ENCODE measurements at regions of chr22 and their contacts with region 1.

Region 1: GRCh38 chr22:22045571-22046335 is 63.2 kb upstream of the TOP3B start:
- DNase-seq: no peak
- H3K4me3 ChIP-seq: no peak overlapping the region
- H3K27ac ChIP-seq: no peak overlapping the region
- H3K4me1 ChIP-seq: no peaks in the 10 kb centered on the region
- H3K27me3 ChIP-seq: no peaks in the 10 kb centered on the region
- CTCF ChIP-seq: no peak
- POLR2A ChIP-seq: no peak

Region 2: DNA sequence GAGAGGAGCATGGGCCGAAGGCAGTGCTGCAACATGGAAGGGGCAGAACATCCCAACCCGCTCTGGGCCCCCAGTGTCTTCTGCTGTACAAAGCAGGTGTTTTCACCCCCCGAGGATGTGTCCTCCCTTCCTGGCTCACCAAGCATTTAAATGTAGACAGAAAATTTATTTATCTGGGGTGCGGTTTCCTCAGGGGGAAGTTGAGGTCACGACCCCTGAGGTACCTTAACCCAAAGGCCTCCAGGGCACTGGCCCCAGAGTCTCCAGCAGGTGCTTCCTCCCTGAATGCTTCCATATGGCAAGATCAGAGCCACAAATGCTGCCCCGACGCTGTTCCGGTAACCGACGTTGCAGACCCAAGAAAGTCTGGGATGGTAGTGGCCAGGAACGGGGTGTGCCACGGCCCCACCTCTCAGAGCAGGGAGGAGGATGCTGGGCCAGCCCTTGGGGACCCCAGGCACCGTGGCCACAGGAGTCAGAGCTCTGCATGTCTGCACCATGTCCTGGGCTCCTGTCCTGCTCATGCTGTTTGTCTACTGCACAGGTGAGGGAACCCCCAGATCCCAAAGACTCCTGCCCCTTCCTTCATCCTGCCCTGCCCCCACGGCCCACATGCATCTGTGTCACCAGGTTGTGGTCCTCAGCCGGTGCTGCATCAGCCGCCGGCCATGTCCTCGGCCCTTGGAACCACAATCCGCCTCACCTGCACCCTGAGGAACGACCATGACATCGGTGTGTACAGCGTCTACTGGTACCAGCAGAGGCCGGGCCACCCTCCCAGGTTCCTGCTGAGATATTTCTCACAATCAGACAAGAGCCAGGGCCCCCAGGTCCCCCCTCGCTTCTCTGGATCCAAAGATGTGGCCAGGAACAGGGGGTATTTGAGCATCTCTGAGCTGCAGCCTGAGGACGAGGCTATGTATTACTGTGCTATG is 198.8 kb after region 1 on chr22 and contains the start of gene VPREB1:
- intact Hi-C with region 1: loop called (anchors 5 kb)
- DNase-seq: peak in 1 of 2 donors; percentile 64
- H3K4me3 ChIP-seq: no peak within 1 kb of the TSS
- H3K27ac ChIP-seq: no peak within 1 kb of the TSS
- H3K4me1 ChIP-seq: no peaks in the 10 kb centered on the region
- H3K27me3 ChIP-seq: no peaks in the 10 kb centered on the region
- CTCF ChIP-seq: no peak
- POLR2A ChIP-seq: no peak
- total RNA-seq, gene VPREB1: not detected